Ovary (tissue), 10 donors: ENCODE measurements at regions of chr2 and their contacts with region 1.

Region 1: GRCh38 chr2:95728878-95729596 is 137.2 kb downstream of the TRIM43 start:
- DNase-seq: peak; percentile 53 to 75 (median 61)
- H3K4me3 ChIP-seq: no peak overlapping the region
- H3K27ac ChIP-seq: no peak overlapping the region
- H3K4me1 ChIP-seq: no peaks in the 10 kb centered on the region
- H3K27me3 ChIP-seq: no peaks in the 10 kb centered on the region
- CTCF ChIP-seq: peak; percentile 48 to 64 (median 57)
- EP300 ChIP-seq: no peak
- POLR2A ChIP-seq: no peak

Region 2: DNA sequence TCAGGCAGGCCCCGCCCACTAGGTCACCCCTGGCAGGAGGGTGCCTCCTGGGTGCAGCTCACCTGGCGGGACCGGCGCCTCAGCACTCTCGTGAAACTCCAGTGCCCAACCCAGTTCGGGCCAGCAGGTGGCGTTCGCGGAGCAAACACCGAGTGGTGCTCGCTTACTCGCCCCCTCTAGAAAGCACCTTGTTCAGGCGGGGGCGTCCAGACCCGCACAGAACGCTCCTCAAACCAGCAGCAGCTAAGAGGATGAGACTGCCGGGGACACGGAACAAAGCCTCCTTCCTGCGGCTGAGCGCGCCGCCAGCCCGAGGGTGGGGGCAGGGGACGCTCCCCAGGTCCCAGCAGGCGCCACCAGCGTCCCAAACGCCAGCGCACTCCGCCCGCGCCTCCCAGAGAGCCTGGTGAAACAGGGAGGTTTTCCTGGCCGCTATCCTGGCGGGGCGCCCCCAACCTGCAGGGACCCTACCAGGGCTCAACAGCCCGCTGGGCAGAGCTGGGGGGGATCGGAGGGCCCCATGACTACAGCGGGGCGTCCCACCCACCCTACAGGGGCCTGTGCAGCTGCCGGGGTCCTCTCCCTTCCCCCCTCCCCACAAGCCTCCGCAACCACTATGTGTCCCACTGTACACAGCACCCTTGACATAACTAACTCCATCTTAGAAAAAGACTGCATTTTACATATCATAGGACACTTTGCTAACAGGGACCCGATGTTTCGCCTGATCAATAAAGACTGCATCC is 652.1 kb before region 1 on chr2:
- intact Hi-C with region 1: loop called in 1 of 4 experiments (anchors 10 kb)
- DNase-seq: peak; percentile 53 to 74 (median 60)
- H3K4me3 ChIP-seq: peak overlapping the region; percentile 26
- H3K27ac ChIP-seq: no peak overlapping the region
- H3K4me1 ChIP-seq: no peaks in the 10 kb centered on the region
- H3K27me3 ChIP-seq: no peaks in the 10 kb centered on the region
- CTCF ChIP-seq: peak in 2 of 3 donors; percentile 35 to 56
- EP300 ChIP-seq: no peak
- POLR2A ChIP-seq: no peak

Region 3: GRCh38 chr2:95185197-95185596 is 543.8 kb before region 1 on chr2:
- intact Hi-C with region 1: loop called in 1 of 4 experiments (anchors 10 kb)
- DNase-seq: no peak
- H3K4me3 ChIP-seq: no peak overlapping the region
- H3K27ac ChIP-seq: no peak overlapping the region
- H3K4me1 ChIP-seq: no peaks in the 10 kb centered on the region
- H3K27me3 ChIP-seq: no peaks in the 10 kb centered on the region
- CTCF ChIP-seq: no peak
- EP300 ChIP-seq: no peak
- POLR2A ChIP-seq: no peak

Region 4: GRCh38 chr2:95345566-95346230 is 383.3 kb before region 1 on chr2:
- intact Hi-C with region 1: loop called in 2 of 4 experiments (anchors 5 kb)
- DNase-seq: peak; percentile 86 to 95 (median 87)
- H3K4me3 ChIP-seq: peak overlapping the region; percentile 69
- H3K27ac ChIP-seq: peak overlapping the region in 1 of 2 donors; percentile 78
- H3K4me1 ChIP-seq: peaks cover 8% of the 10 kb centered on the region
- H3K27me3 ChIP-seq: no peaks in the 10 kb centered on the region
- CTCF ChIP-seq: peak; percentile 82 to 96 (median 84)
- EP300 ChIP-seq: no peak
- POLR2A ChIP-seq: no peak